Aorta (tissue), 5 donors: ENCODE measurements at regions of chr13 and their contacts with region 1.

Region 1: DNA sequence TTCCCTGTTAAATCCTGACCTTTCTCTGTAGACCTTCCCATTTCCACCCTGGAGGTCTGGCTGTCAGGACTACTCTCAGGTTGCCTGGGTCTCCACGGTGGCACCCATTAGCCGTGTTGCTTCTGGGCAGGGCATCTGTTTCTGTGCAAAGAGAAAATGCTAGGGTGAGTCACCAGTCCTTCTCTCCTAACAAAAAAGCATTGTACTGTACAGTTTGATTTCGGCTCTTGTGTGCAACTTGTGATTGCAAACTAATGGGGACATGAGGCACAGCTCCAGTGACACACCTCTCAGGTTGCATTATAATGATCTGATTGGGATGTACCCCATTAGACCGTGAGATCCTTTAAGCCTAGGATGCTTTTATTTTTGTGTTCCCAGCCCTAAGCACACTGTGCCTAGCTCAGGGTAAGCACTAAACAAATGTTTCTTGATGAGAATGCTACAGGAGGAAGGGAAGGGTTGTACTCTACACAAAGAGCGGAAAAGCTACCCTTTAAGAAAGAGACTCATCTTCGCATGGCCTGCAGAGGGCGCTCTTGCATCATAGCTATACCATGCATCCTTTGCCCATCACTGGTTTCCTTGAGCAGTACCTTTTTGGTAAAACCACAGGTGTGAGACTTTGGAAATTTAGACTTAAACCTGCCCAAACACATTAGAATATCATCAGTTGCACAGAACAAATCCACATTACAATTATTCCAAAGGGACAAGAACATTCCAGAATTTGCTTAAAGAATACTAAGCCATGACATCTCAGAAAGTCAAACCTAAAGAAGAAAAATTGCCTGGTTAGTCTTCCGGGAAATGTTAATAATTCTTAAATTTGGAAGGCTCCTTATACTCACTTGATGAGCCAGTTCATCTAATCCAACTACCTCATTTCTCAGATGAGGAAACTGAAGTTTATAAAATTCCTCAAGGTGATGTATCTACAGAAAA is 20.3 kb upstream of the TRIM13 start:
- DNase-seq: peak; percentile 73 to 89
- ATAC-seq: peak; percentile 87
- H3K4me3 ChIP-seq: no peak overlapping the region
- H3K27ac ChIP-seq: no peak overlapping the region
- H3K4me1 ChIP-seq: no peaks in the 10 kb centered on the region
- H3K27me3 ChIP-seq: no peaks in the 10 kb centered on the region

Region 2: GRCh38 chr13:50801087-50801931 is 824.7 kb after region 1 on chr13:
- intact Hi-C with region 1: loop called (anchors 5 kb)
- DNase-seq: peak in 1 of 2 donors; percentile 55
- ATAC-seq: peak; percentile 92
- H3K4me3 ChIP-seq: no peak overlapping the region
- H3K27ac ChIP-seq: no peak overlapping the region
- H3K4me1 ChIP-seq: peaks cover 0 to 3% of the 10 kb centered on the region in 2 donors
- H3K27me3 ChIP-seq: no peaks in the 10 kb centered on the region

Region 3: DNA sequence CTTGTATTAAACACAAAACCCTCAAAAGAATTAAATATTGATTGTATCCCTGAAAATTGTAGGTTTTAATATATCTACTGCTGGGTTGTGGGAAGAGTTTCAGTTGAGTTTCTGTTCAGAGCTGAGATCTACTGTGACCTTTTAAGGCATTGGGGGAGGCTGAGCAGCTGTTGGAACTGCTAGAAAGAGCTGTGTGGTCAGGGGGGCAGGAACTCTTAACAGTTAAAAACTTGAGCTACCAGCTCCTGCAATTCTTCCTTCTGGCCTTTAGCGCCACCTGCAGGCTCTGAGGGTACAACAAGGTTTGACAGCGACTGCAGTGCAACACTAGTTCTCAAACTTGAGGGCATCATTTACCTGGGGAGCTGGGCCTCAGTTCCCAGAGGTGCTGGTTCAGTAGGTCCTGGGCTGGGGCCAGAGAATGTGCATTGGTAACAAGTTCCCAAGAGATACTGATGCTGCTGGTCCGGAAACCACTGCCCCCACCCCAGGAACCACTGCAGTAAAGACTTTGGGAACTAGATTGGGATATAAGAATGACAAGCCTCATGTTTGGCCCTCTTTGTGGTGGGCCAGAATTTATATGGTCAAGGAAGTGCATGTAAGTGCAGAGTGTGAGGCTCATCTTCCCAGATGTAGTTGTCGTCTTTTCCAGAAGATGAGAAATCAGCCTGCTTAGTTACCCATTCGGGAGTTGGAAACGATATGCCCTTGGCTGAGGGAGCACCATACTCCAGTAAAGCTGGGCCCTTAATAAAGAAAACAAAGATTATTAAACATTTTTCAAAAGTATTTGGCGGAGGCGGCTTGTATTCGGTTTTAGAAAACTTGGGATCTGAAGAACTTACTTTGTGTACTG is 935.6 kb after region 1 on chr13:
- intact Hi-C with region 1: loop called in 1 of 2 experiments (anchors 10 kb)
- DNase-seq: peak; percentile 93 to 95
- ATAC-seq: peak; percentile 67
- H3K4me3 ChIP-seq: no peak overlapping the region
- H3K27ac ChIP-seq: no peak overlapping the region
- H3K4me1 ChIP-seq: no peaks in the 10 kb centered on the region
- H3K27me3 ChIP-seq: no peaks in the 10 kb centered on the region

Region 4: DNA sequence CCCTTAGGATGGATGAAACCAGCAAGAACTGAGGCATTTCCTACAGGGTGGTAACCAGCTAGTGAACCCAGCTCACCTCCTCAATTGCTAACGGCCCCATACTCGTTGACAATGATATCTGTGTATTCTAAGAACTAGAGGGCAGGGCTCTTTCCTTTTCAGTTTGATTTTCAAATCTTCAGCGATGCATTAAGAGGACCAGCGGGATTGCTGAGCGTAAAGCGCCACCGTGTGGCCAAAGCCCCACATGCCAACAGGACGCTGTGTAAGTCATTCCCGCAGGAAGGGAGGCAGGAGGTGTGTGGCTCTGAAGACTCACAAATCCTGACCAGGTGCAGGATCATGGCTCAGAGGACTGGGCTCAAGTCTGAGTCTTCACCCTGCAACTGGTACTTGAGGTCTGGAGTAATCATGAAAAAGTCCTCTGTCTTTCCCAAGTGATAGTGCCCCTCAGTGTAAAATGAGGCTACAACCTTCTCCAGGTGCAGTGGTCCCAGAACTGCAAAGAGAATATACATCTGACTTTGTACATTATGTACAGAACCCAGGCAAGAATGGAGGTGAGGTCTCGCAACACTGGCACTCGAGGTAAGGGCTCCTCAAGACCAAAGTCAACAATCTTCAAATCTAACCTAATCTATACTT is 1093.5 kb after region 1 on chr13:
- intact Hi-C with region 1: loop called in 1 of 2 experiments (anchors 10 kb)
- DNase-seq: peak; percentile 84 to 95
- ATAC-seq: peak; percentile 91
- H3K4me3 ChIP-seq: no peak overlapping the region
- H3K27ac ChIP-seq: no peak overlapping the region
- H3K4me1 ChIP-seq: no peaks in the 10 kb centered on the region
- H3K27me3 ChIP-seq: no peaks in the 10 kb centered on the region